ENCODE measurements at regions of chr6 and their contacts with region 1.

Region 1: DNA sequence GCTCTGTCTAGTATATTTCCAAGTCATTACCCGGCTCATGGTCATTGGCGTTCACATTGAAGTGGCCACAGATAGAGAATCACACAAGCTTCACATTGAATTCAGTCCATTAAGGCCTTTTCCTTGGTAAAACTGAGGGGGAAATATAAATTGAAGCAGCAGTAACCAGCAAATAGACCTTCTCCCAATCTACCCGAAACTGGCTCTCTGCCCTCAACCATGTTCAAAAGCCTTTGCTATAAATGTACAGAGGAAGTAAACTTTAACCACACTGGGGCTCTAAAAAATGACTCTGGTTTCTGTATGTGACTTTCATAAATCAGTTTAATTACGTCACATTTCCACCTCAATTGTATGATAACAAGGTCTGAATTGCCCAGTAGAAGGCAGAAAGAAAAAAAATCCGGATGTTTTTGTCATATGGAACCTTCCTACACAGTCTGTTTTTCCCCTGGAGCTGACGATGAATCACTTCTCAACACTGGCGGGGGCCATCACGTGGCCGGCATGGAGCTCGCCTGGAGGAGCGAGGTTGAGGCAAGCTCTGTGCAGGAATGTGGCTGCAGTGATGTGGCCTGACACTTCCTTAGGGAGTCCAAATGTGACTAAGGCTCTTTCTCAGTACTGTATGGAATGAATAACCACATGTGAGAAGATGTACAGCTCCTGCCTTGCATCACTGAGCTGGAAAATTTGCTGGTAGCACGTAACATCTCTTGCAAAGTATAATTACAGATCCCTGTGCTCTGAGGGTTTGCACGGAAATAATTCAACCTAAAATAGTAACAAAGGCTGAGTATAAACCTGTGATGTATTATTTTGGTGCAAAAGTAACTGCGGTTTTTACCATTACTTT is 58.6 kb upstream of the SNX9 start:
- DNase-seq: peak; percentile 79
- H3K4me3 Mint-ChIP-seq: peak overlapping the region; percentile 43
- H3K27ac Mint-ChIP-seq: peak overlapping the region; percentile 86
- H3K4me1 Mint-ChIP-seq: peaks cover 65% of the 10 kb centered on the region
- H3K27me3 Mint-ChIP-seq: peaks cover 15% of the 10 kb centered on the region

Region 2: GRCh38 chr6:157800420-157801237 is 36.2 kb after region 1 on chr6:
- intact Hi-C with region 1: loop called (anchors 1 kb)
- DNase-seq: no peak
- H3K4me3 Mint-ChIP-seq: no peak overlapping the region
- H3K27ac Mint-ChIP-seq: peak overlapping the region; percentile 21
- H3K4me1 Mint-ChIP-seq: peaks cover 42% of the 10 kb centered on the region
- H3K27me3 Mint-ChIP-seq: peaks cover 54% of the 10 kb centered on the region

Region 3: DNA sequence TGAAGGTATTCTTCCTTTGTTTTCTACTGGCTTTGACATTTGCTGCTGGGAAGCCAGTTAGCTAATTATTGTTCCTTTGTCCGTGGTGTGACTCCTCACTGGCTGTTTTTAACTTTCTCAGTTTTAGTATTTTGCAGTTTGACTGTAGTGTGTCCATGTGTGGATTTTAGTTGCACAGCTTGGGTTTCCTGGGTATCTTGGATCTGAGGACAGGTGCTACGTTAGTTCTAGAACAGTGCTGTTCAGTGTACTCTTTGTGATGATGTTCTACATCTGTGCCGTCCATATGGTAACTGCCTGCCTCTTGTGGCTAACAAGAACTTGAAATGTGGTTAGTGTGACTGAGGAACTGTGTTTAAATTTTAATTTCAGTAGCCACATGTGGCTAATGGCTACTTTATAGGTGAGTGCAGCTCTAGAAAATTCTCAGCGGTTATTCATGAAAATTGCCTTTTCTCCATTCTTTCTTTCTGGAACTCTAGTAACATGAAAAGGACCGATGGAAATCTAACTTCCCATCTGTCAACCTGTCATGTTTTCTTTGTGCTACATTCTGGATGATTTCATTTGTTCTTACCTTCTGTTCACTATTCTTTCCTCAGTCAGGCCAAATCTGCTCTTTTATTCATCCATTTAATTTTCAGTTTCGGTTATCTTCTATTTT is 66.1 kb after region 1 on chr6:
- intact Hi-C with region 1: loop called (anchors 2 kb)
- DNase-seq: no peak
- H3K4me3 Mint-ChIP-seq: no peak overlapping the region
- H3K27ac Mint-ChIP-seq: peak overlapping the region; percentile 36
- H3K4me1 Mint-ChIP-seq: peaks cover 50% of the 10 kb centered on the region
- H3K27me3 Mint-ChIP-seq: peaks cover 1% of the 10 kb centered on the region

Region 4: DNA sequence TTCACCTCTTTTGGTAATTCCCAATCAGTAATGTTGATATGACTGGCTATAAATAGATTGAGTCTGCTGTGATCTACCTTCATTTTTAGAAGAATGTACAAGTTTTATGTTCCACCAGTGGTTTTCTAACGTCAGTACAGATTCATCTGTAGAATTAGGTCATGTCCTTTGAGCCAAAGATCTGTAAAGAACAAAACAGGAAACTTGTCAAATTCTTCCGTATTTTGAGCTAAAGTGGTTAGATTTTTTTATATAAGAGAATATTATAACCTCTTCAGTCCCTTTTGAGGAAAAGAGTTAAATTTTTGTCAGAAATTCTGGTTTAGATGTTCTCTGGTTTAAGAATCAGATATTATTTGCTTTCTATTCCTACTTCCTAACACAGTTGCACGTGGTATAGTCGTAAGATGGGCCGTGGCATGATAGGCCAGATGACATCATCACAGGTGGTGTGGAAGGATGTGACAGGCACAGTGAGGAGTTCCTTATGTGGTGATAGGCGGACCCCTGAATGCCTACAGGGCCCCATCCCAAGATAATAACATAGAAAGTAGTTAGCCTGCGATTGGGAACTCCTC is 120.9 kb after region 1 on chr6:
- intact Hi-C with region 1: loop called (anchors 1 kb)
- DNase-seq: peak; percentile 37
- H3K4me3 Mint-ChIP-seq: no peak overlapping the region
- H3K27ac Mint-ChIP-seq: peak overlapping the region; percentile 86
- H3K4me1 Mint-ChIP-seq: peaks cover 55% of the 10 kb centered on the region
- H3K27me3 Mint-ChIP-seq: peaks cover 11% of the 10 kb centered on the region

Region 5: DNA sequence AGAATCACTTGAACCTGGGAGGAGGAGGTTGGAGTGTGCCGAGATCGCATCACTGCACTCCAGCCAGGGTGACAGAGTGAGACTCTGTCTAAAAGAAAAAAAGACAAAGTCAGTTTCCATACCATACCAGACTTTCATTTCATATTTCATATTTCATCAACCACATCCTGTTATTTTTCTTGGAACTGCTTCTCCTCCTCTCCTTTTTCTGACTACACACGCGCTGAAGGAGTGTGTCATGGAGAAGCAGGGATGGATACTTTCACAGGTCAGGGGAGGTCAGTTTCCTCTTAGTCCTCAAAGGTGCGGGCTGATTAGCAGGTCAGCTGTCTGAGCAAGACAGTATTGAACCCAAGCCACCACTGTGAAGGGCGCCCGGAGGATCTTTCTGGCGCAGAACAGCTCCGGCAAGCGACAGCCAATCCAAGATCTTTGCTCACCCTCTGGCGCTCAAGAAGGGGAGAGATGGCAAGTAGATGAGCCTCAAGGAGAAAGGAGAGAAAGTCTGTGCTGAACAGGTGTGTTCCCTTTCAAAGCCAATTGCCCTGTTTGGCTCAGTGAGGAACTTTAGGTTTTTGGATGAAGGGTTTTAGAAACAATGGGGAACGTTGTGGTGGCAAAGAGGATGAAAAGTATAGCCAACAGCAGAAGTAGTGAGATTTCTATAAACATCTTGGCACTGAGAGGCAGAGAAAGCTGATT is 198.3 kb after region 1 on chr6:
- intact Hi-C with region 1: loop called (anchors 2 kb)
- DNase-seq: peak; percentile 27
- H3K4me3 Mint-ChIP-seq: peak overlapping the region; percentile 76
- H3K27ac Mint-ChIP-seq: peak overlapping the region; percentile 86
- H3K4me1 Mint-ChIP-seq: peaks cover 24% of the 10 kb centered on the region
- H3K27me3 Mint-ChIP-seq: no peaks in the 10 kb centered on the region

Region 6: GRCh38 chr6:158649289-158650143 is 885.1 kb after region 1 on chr6 and contains the start of gene SYTL3:
- intact Hi-C with region 1: loop called (anchors 2 kb)
- DNase-seq: peak; percentile 80
- H3K4me3 Mint-ChIP-seq: peak within 1 kb of the TSS; percentile 90
- H3K27ac Mint-ChIP-seq: peak within 1 kb of the TSS; percentile 92
- H3K4me1 Mint-ChIP-seq: peaks cover 65% of the 10 kb centered on the region
- H3K27me3 Mint-ChIP-seq: no peaks in the 10 kb centered on the region
- total RNA-seq, gene SYTL3: 232 and 242 TPM in 2 replicates